ENCODE measurements at regions of chr12 and their contacts with region 1.

Region 1: DNA sequence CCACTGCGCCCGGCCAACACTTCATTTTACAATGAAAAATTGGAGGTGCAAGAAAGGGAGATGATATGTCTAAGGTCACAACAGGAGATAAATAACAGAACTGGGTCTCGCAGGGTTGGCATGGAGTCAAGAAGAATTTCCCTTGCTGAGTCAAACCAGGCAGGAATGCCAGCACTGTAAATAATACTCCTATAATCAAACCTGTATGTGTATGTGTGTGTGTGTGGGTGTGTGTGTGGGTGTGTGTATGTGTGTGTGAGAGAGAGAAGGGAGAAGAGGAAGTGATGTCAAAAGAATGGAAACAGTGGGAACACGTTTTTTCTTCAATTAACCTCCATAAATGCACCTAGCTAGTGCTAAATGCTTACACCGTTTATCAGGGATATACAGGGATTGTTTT is 70.4 kb downstream of the TMEM116 start:
- DNase-seq: no peak
- ATAC-seq: no peak
- H3K4me3 ChIP-seq: no peak overlapping the region
- H3K4me3 Mint-ChIP-seq: no peak overlapping the region
- H3K27ac ChIP-seq: no peak overlapping the region
- H3K27ac Mint-ChIP-seq: no peak overlapping the region
- H3K4me1 ChIP-seq: no peaks in the 10 kb centered on the region
- H3K4me1 Mint-ChIP-seq: peaks cover 13% of the 10 kb centered on the region
- H3K27me3 ChIP-seq: no peaks in the 10 kb centered on the region
- H3K27me3 Mint-ChIP-seq: no peaks in the 10 kb centered on the region
- CTCF ChIP-seq: no peak

Region 2: GRCh38 chr12:111993292-111994150 is 51.0 kb after region 1 on chr12:
- CTCF ChIA-PET with region 1: no interaction called
- POLR2A ChIA-PET with region 1: interaction called, 3 read pairs
- intact Hi-C with region 1: loop called in 1 of 2 experiments (anchors 5 kb)
- DNase-seq: peak in 6 of 9 experiments; percentile 29 to 73 (median 54)
- ATAC-seq: peak; percentile 80
- H3K4me3 ChIP-seq: peak overlapping the region; percentile 43 to 53
- H3K4me3 Mint-ChIP-seq: peak overlapping the region; percentile 84
- H3K27ac ChIP-seq: peak overlapping the region; percentile 36 to 74
- H3K27ac Mint-ChIP-seq: peak overlapping the region; percentile 91
- H3K4me1 ChIP-seq: peaks cover 70% of the 10 kb centered on the region
- H3K4me1 Mint-ChIP-seq: peaks cover 72% of the 10 kb centered on the region
- H3K27me3 ChIP-seq: no peaks in the 10 kb centered on the region
- H3K27me3 Mint-ChIP-seq: no peaks in the 10 kb centered on the region
- CTCF ChIP-seq: no peak

Region 3: DNA sequence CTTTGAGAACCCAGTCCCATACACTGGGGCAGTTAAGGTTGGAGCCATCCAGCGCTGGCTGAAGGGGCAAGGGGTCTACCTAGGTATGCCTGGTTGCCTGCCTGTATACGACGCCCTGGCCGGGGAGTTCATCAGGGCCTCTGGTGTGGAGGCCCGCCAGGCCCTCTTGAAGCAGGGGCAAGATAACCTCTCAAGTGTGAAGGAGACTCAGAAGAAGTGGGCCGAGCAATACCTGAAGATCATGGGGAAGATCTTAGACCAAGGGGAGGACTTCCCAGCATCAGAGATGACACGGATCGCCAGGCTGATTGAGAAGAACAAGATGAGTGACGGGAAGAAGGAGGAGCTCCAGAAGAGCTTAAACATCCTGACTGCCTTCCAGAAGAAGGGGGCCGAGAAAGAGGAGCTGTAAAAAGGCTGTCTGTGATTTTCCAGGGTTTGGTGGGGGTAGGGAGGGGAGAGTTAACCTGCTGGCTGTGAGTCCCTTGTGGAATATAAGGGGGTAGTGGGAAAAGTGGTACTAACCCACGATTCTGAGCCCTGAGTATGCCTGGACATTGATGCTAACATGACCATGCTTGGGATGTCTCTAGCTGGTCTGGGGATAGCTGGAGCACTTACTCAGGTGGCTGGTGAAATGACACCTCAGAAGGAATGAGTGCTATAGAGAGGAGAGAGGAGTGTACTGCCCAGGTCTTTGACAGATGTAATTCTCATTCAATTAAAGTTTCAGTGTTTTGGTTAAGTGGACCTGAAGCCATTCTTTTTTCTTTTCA is 79.9 kb after region 1 on chr12:
- CTCF ChIA-PET with region 1: interaction called, 13 read pairs
- POLR2A ChIA-PET with region 1: interaction called, 4 read pairs
- intact Hi-C with region 1: no loop called
- DNase-seq: no peak
- ATAC-seq: no peak
- H3K4me3 ChIP-seq: no peak overlapping the region
- H3K4me3 Mint-ChIP-seq: no peak overlapping the region
- H3K27ac ChIP-seq: no peak overlapping the region
- H3K27ac Mint-ChIP-seq: peak overlapping the region; percentile 42
- H3K4me1 ChIP-seq: peaks cover 21% of the 10 kb centered on the region
- H3K4me1 Mint-ChIP-seq: peaks cover 49% of the 10 kb centered on the region
- H3K27me3 ChIP-seq: no peaks in the 10 kb centered on the region
- H3K27me3 Mint-ChIP-seq: no peaks in the 10 kb centered on the region
- CTCF ChIP-seq: no peak

Region 4: DNA sequence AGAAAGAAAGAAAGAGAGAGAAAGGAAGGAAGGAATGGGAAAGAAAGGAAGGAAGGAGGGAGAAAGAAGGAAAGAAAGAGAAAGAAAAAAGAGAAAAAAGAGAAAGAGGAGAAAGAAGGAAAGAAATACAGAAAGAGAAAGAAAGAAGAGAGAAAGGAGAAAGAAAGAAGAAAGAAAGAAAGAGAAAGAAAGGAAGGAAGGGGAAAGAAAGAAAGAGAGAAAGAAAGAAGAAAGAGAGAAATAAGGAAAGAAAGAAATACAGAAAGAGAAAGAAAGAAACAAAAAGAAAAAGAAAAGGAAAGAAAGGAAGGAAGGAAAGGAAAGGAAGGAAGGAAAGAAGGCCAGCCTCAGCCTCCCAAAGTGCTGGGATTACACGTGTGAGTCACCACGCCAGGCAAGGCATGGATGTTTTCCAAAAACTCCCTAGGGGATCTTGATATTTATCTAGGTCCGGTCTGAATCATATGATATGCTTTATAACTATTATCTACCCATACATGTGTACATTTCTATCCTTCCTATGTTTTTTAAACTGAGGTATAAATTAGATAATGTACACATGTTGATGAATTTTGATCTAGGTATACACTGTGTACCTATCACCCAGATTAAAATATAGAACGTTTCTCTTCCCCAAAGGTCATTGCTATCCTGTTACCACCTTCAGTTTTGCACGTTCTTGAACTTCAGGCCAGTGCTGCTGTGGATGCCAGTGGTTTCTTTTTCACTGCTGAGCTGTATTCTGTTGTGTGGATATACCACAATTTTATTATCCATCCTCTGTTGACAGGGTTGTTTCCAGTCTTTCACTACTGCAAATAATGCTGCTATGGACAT is 1845.7 kb after region 1 on chr12:
- CTCF ChIA-PET with region 1: no interaction called
- POLR2A ChIA-PET with region 1: no interaction called
- intact Hi-C with region 1: no loop called
- DNase-seq: no peak
- ATAC-seq: no peak
- H3K4me3 ChIP-seq: no peak overlapping the region
- H3K4me3 Mint-ChIP-seq: no peak overlapping the region
- H3K27ac ChIP-seq: no peak overlapping the region
- H3K27ac Mint-ChIP-seq: no peak overlapping the region
- H3K4me1 ChIP-seq: no peaks in the 10 kb centered on the region
- H3K4me1 Mint-ChIP-seq: no peaks in the 10 kb centered on the region
- H3K27me3 ChIP-seq: peaks cover 0 to 3% of the 10 kb centered on the region in 2 experiments
- H3K27me3 Mint-ChIP-seq: no peaks in the 10 kb centered on the region
- CTCF ChIP-seq: no peak